Activated CD8-positive, alpha-beta T cell treated with anti-CD3 and anti-CD28 coated beads for 36 hours (primary cell): ENCODE measurements at regions of chr12 and their contacts with region 1.

Region 1: GRCh38 chr12:10153271-10154144 is 18.4 kb downstream of the OLR1 start:
- DNase-seq: peak; percentile 68
- ATAC-seq: peak; percentile 83
- H3K4me3 Mint-ChIP-seq: peak overlapping the region; percentile 76
- H3K27ac Mint-ChIP-seq: peak overlapping the region; percentile 43
- H3K4me1 Mint-ChIP-seq: peaks cover 12% of the 10 kb centered on the region
- H3K27me3 Mint-ChIP-seq: peaks cover 2% of the 10 kb centered on the region
- CTCF ChIP-seq: peak; percentile 92

Region 2: DNA sequence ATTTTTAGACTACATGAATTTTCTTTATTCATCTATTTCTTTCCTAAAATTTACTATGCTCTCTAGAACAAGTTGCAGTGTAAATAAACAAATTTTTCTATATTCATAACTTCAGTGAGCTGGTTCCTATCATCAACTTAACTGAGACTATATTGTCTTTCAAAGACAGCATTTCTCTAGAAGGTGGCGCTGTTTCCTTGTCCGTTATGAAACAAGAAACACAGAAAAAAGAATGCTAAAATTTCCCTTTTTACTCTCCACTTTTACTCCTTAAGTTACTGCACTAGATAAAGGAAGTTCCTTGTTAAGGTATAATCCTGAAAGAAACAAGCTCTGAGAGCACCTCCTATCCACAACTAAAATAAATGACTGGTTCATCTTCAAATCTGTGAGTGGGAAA is 213.1 kb before region 1 on chr12:
- CTCF ChIA-PET with region 1: interaction called, 10 read pairs
- POLR2A ChIA-PET with region 1: no interaction called
- intact Hi-C with region 1: no loop called
- DNase-seq: peak; percentile 25
- ATAC-seq: no peak
- H3K4me3 Mint-ChIP-seq: no peak overlapping the region
- H3K27ac Mint-ChIP-seq: no peak overlapping the region
- H3K4me1 Mint-ChIP-seq: peaks cover 6% of the 10 kb centered on the region
- H3K27me3 Mint-ChIP-seq: peaks cover 2% of the 10 kb centered on the region
- CTCF ChIP-seq: peak; percentile 47

Region 3: DNA sequence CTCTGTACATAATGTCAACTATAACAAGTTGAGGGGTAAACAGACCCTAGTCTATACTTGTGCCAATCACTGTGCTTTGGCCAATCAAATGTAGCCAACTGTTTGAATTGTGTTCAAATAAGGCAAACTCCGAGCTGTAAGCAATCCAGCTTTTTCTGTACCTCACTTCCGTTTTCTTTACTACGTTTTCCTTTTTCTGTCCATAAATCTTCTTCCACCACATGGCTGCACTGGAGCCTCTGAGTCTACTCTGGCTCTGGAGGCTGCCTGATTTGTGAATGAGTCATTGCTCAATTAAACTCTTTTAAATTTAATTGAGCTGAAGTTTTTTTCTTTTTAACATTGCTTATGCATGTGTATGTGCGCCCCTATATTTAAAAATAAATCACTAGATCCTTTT is 84.4 kb before region 1 on chr12:
- CTCF ChIA-PET with region 1: no interaction called
- POLR2A ChIA-PET with region 1: no interaction called
- intact Hi-C with region 1: no loop called
- DNase-seq: no peak
- ATAC-seq: no peak
- H3K4me3 Mint-ChIP-seq: no peak overlapping the region
- H3K27ac Mint-ChIP-seq: no peak overlapping the region
- H3K4me1 Mint-ChIP-seq: no peaks in the 10 kb centered on the region
- H3K27me3 Mint-ChIP-seq: peaks cover 27% of the 10 kb centered on the region
- CTCF ChIP-seq: no peak

Region 4: GRCh38 chr12:10082117-10082874 is 71.2 kb before region 1 on chr12:
- CTCF ChIA-PET with region 1: no interaction called
- POLR2A ChIA-PET with region 1: no interaction called
- intact Hi-C with region 1: no loop called
- DNase-seq: no peak
- ATAC-seq: no peak
- H3K4me3 Mint-ChIP-seq: no peak overlapping the region
- H3K27ac Mint-ChIP-seq: no peak overlapping the region
- H3K4me1 Mint-ChIP-seq: no peaks in the 10 kb centered on the region
- H3K27me3 Mint-ChIP-seq: peaks cover 4% of the 10 kb centered on the region
- CTCF ChIP-seq: no peak

Region 5: DNA sequence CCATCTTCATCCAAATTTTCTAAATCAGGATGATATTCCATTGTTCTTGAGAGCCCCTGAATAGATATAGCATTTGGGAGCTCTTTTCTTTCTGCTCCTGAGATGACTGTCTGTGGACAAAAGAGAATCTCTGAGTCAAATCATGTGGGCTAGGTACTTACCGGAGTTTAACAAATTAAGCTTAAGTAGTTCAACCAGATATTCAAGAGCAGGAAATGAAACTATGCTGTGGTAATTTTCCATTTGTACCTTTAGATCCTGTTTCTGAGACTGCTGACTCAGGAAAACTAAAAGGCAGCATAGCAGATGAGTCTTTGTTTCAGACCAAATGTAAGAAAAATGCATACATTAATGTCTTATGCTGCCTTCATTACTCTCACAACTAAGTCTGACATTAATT is 23.5 kb before region 1 on chr12 and contains the start of gene CLEC7A:
- CTCF ChIA-PET with region 1: interaction called, 10 read pairs
- POLR2A ChIA-PET with region 1: no interaction called
- intact Hi-C with region 1: no loop called
- DNase-seq: no peak
- ATAC-seq: peak; percentile 89
- H3K4me3 Mint-ChIP-seq: no peak within 1 kb of the TSS
- H3K27ac Mint-ChIP-seq: no peak within 1 kb of the TSS
- H3K4me1 Mint-ChIP-seq: peaks cover 13% of the 10 kb centered on the region
- H3K27me3 Mint-ChIP-seq: peaks cover 10% of the 10 kb centered on the region
- CTCF ChIP-seq: no peak
- total RNA-seq, gene CLEC7A: not detected

Region 6: DNA sequence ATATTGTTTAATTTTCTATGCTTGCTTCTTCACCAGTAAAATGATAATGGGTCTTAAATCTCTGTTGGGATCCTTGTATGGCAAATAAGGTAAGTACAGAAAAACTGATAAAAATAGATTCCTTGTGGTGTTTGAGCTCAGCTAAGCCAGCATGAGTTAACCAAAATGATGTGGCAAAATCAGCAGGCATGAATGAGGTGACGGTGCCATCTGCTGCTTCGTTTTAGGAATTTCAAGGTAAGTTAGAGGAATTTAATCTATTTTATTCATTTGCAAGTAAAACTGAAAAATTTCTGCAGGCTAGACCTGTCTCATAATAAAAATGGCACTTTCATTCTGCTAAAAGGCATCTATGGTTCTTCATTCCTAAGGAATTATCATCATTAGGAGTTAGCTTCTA is 13.5 kb before region 1 on chr12:
- CTCF ChIA-PET with region 1: interaction called, 24 read pairs
- POLR2A ChIA-PET with region 1: interaction called, 3 read pairs
- intact Hi-C with region 1: no loop called
- DNase-seq: peak; percentile 66
- ATAC-seq: peak; percentile 49
- H3K4me3 Mint-ChIP-seq: no peak overlapping the region
- H3K27ac Mint-ChIP-seq: no peak overlapping the region
- H3K4me1 Mint-ChIP-seq: peaks cover 2% of the 10 kb centered on the region
- H3K27me3 Mint-ChIP-seq: peaks cover 6% of the 10 kb centered on the region
- CTCF ChIP-seq: peak; percentile 66

Region 7: GRCh38 chr12:10190558-10191388 is 37.3 kb after region 1 on chr12:
- CTCF ChIA-PET with region 1: interaction called, 35 read pairs
- POLR2A ChIA-PET with region 1: interaction called, 3 read pairs
- intact Hi-C with region 1: loop called (anchors 2 kb)
- DNase-seq: peak; percentile 73
- ATAC-seq: peak; percentile 99
- H3K4me3 Mint-ChIP-seq: no peak overlapping the region
- H3K27ac Mint-ChIP-seq: no peak overlapping the region
- H3K4me1 Mint-ChIP-seq: peaks cover 4% of the 10 kb centered on the region
- H3K27me3 Mint-ChIP-seq: peaks cover 18% of the 10 kb centered on the region
- CTCF ChIP-seq: peak; percentile 75

Region 8: DNA sequence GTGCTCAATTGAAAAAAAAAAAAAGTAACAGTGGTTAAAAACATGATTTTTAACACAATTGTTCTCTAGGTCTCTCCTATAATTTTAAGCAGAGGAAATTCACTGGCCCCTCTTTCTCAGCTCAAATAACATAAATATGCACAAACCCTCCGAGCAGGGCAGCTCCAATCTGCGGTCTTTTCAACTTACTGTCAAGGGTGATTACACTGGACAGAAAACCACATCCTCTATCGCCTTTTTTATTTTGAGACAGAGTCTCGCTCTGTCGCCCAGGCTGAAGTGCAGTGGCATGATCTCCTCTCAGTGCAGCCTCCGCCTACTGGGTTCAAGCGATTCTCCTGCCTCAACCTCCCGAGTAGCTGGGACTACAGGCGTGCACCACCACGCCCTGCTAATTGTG is 42.7 kb after region 1 on chr12:
- CTCF ChIA-PET with region 1: interaction called, 35 read pairs
- POLR2A ChIA-PET with region 1: no interaction called
- intact Hi-C with region 1: loop called (anchors 2 kb)
- DNase-seq: no peak
- ATAC-seq: peak; percentile 60
- H3K4me3 Mint-ChIP-seq: no peak overlapping the region
- H3K27ac Mint-ChIP-seq: no peak overlapping the region
- H3K4me1 Mint-ChIP-seq: peaks cover 3% of the 10 kb centered on the region
- H3K27me3 Mint-ChIP-seq: peaks cover 17% of the 10 kb centered on the region
- CTCF ChIP-seq: no peak

Region 9: DNA sequence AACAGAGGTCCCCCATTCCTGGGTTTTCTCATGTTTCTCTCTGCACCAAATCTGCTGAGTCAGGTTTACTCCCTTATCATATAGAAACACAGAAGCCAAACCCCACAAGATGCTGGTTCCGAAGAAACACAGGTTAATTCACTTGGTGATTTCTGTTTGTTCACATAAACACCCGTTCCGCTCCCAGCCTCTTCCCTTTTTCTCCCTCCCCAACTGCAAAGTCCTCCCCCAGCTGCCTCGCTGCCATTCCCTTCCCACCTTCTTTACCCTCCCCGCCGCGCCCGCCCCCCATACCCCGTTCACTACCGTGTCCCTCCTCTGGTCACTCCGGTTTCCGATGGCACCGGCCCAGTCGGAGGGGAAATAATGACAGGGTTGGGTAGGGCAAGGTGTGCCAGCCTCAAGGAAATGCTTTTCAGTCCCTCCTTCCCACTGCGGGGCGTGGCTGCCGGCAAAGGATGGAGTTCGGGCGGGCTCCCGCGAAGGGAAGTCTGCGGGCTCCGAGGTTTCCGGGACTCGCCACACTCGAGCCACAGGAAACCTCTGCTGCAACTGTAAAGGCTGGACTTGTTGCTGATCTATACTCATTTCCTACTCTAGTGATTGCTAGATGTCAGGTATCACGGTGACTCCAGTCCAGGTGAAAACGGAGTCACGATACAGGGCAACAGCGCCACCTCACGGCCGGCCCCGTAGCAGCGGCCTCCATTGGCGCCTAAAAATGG is 520.3 kb after region 1 on chr12 and contains the start of gene STYK1:
- CTCF ChIA-PET with region 1: no interaction called
- POLR2A ChIA-PET with region 1: no interaction called
- intact Hi-C with region 1: loop called (anchors 10 kb)
- DNase-seq: peak; percentile 84
- ATAC-seq: peak; percentile 81
- H3K4me3 Mint-ChIP-seq: peak within 1 kb of the TSS; percentile 71
- H3K27ac Mint-ChIP-seq: peak within 1 kb of the TSS; percentile 76
- H3K4me1 Mint-ChIP-seq: peaks cover 39% of the 10 kb centered on the region
- H3K27me3 Mint-ChIP-seq: peaks cover 20% of the 10 kb centered on the region
- CTCF ChIP-seq: peak; percentile 99
- total RNA-seq, gene STYK1: 0.70 to 1.1 TPM